Motor neuron (in vitro differentiated cells): ENCODE measurements at regions of chr3 and their contacts with region 1.

Region 1: DNA sequence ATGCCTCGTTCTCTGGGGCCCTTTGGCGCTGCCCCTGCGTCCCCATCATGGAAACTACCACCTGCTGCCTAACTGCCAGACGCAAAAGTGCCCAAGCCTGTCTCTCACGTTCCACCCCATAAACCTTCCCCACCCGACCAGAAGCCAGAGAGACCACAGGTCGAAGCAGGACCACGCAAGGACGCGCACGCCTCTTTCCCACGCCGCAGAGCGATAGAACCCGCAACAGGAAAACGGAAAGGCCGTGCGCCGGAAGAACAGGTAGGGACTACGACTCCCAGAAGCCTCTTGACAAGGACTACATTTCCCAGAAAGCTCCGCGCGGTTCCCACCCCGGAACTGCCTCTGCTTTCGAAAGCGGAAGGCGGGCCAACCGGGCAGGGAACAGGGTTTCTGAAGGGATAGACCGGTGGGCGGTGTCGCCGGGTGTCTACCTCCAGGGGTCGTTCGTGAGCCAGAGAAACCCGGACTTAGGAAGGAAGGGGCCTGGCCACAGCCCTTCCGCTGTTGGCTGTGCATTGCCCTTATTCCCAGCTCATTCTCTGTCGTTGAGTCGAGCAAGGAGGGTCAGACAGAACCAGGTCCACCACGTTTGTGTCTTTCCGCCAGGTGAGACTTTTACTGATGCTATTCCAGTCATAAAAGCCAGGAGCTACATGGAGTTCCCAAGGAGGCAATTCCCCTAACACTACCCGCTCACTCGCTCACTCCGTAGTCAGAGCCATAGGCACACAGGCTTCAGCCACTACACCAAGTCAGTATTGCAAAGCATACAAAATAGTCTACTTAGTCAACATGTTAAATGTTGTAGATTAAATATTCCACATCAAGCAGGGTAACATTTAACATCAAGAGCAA is 56.6 kb upstream of the ZBTB38 start:
- ATAC-seq: peak; percentile 95 to 98 (median 96)
- H3K4me3 ChIP-seq: peak overlapping the region; percentile 37 to 65 (median 53)
- H3K27ac ChIP-seq: peak overlapping the region; percentile 42 to 71
- H3K4me1 ChIP-seq: peaks cover 10 to 11% of the 10 kb centered on the region in 2 donors

Region 2: GRCh38 chr3:141441381-141442364 is 129.9 kb after region 1 on chr3:
- in situ Hi-C with region 1: loop called in 1 of 9 experiments (anchors 25 kb)
- ATAC-seq: peak in 7 of 8 experiments; percentile 38 to 100 (median 76)
- H3K4me3 ChIP-seq: no peak overlapping the region
- H3K27ac ChIP-seq: no peak overlapping the region
- H3K4me1 ChIP-seq: peaks cover 0 to 7% of the 10 kb centered on the region in 2 donors

Region 3: GRCh38 chr3:141452036-141452435 is 140.3 kb after region 1 on chr3:
- in situ Hi-C with region 1: loop called in 5 of 9 experiments (anchors 10 to 25 kb)
- ATAC-seq: peak; percentile 12 to 85 (median 57)
- H3K4me3 ChIP-seq: no peak overlapping the region
- H3K27ac ChIP-seq: no peak overlapping the region
- H3K4me1 ChIP-seq: peaks cover 6 to 17% of the 10 kb centered on the region in 2 donors

Region 4: GRCh38 chr3:141460097-141460704 is 148.5 kb after region 1 on chr3:
- in situ Hi-C with region 1: loop called in 4 of 9 experiments (anchors 10 to 25 kb)
- ATAC-seq: peak; percentile 57 to 100 (median 100)
- H3K4me3 ChIP-seq: no peak overlapping the region
- H3K27ac ChIP-seq: no peak overlapping the region
- H3K4me1 ChIP-seq: peaks cover 0 to 3% of the 10 kb centered on the region in 2 donors

Region 5: DNA sequence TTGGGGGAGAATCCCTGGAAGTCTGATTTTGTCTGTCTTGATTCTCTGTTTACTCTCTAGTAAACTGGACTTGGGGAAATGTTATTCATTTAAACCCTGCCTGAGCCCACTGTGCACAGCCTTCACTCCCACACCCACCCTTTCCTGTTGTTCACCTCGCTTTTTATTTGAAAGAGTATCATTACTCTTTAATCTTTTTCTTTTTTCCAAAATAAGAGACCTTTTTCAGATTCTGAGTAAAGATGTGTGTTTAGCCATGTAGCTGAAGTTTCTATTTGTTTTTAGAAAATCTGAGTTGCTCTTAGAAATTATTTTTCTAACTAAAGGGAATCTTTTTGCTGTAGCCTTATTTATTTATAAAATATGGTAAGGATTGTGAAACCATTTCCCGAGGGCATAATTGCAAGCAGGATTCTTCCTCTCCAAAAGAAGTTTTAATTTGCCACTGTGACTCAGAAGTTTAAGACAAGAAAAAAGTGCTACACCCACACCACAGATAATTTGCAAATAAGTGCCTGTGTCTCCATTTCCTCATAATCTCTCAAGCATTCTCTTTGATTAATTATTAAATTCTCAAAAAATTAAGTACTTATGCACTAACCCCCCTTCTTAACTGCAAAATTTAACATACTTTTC is 218.5 kb after region 1 on chr3:
- in situ Hi-C with region 1: loop called in 1 of 9 experiments (anchors 25 kb)
- ATAC-seq: peak in 3 of 8 experiments; percentile 64 to 91 (median 88)
- H3K4me3 ChIP-seq: no peak overlapping the region
- H3K27ac ChIP-seq: no peak overlapping the region
- H3K4me1 ChIP-seq: no peaks in the 10 kb centered on the region

Region 6: GRCh38 chr3:141561426-141562034 is 249.8 kb after region 1 on chr3:
- in situ Hi-C with region 1: loop called in 2 of 9 experiments (anchors 25 kb)
- ATAC-seq: peak in 2 of 8 experiments; percentile 15 to 36
- H3K4me3 ChIP-seq: no peak overlapping the region
- H3K27ac ChIP-seq: no peak overlapping the region
- H3K4me1 ChIP-seq: peaks cover 0 to 4% of the 10 kb centered on the region in 2 donors